BJ (cell line): ENCODE measurements at regions of chr12 and their contacts with region 1.

Region 1: GRCh38 chr12:95243497-95244183 is 26.0 kb downstream of the VEZT start:
- DNase-seq: no peak
- H3K4me3 ChIP-seq: no peak overlapping the region
- H3K27me3 ChIP-seq: no peaks in the 10 kb centered on the region
- CTCF ChIP-seq: no peak

Region 2: GRCh38 chr12:95277139-95277538 is 33.5 kb after region 1 on chr12:
- CTCF ChIA-PET with region 1: no interaction called
- POLR2A ChIA-PET with region 1: interaction called, 10 read pairs
- DNase-seq: peak; percentile 74
- H3K4me3 ChIP-seq: no peak overlapping the region
- H3K27me3 ChIP-seq: no peaks in the 10 kb centered on the region
- CTCF ChIP-seq: no peak

Region 3: GRCh38 chr12:95336390-95337067 is 92.9 kb after region 1 on chr12:
- CTCF ChIA-PET with region 1: no interaction called
- POLR2A ChIA-PET with region 1: no interaction called
- DNase-seq: peak; percentile 41
- H3K4me3 ChIP-seq: no peak overlapping the region
- H3K27me3 ChIP-seq: no peaks in the 10 kb centered on the region
- CTCF ChIP-seq: peak; percentile 90